Panc1 (cell line): ENCODE measurements at regions of chr11 and their contacts with region 1.

Region 1: GRCh38 chr11:83827940-83828554 is 541.9 kb upstream of the CCDC90B start:
- DNase-seq: peak; percentile 28
- ATAC-seq: peak; percentile 87
- H3K4me3 ChIP-seq: peak overlapping the region; percentile 14 to 25; a peak in 3 of 4 replicates
- H3K27ac ChIP-seq: no peak overlapping the region
- H3K4me1 ChIP-seq: no peaks in the 10 kb centered on the region
- H3K27me3 ChIP-seq: peaks cover 5% of the 10 kb centered on the region; the same call in 1 of the 2 replicates
- CTCF ChIP-seq: peak; percentile 77

Region 2: DNA sequence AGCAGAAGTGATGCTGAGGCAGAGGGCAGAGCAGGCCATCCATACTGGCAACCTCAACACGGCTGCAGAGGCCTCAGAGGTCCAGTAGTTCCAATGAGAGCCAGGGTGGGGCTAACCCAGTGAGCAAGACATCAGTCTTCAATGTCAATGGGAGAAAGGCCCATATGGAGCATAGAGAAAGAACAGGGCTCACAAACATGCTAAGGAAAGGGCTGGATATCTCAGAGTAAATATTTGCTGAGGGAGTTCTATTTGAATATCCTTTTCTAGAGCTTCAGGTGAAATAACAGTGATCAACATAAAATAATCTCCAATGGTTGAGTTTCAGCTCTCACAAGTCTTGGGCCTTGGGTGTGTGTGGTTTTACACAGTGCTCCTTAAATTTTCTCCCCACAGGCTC is 491.1 kb before region 1 on chr11:
- CTCF ChIA-PET with region 1: no interaction called
- POLR2A ChIA-PET with region 1: no interaction called
- in situ Hi-C with region 1: no loop called
- intact Hi-C with region 1: no loop called
- DNase-seq: no peak
- ATAC-seq: no peak
- H3K4me3 ChIP-seq: no peak overlapping the region
- H3K27ac ChIP-seq: no peak overlapping the region
- H3K4me1 ChIP-seq: no peaks in the 10 kb centered on the region
- H3K27me3 ChIP-seq: no peaks in the 10 kb centered on the region
- CTCF ChIP-seq: no peak

Region 3: DNA sequence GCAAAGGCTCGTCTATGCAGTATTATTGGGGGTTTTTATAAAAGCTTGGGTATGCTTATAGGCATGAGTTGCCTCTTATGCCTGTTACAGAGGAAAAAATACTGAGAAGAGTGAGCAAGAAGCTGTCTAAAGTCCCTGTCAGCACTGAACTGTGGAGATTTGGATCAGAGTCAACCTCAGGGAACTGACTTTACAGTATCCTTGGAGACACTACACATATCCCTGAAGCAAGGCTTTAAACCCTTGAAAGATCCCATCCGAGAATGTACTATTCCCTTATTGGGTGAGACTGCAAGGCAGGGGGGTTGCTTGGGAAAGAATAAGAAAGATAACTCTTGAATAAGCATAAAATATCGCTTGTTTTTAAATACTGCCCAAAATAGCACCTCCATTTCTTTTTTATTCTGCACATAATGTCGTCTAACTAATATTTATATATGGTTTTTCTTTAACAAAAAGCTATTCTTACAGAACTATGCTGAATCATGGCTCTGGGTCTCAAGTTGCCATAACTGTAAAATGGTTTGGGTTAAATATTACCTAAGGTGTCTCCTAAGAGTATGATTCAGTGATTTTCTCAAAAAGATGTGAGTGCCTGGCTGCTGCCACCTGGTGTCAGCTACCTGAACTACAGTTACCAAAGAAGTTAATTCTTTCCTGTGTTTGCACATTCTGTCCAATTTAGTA is 736.3 kb after region 1 on chr11:
- CTCF ChIA-PET with region 1: no interaction called
- POLR2A ChIA-PET with region 1: no interaction called
- in situ Hi-C with region 1: no loop called
- intact Hi-C with region 1: loop called (anchors 2 kb)
- DNase-seq: peak; percentile 22
- ATAC-seq: no peak
- H3K4me3 ChIP-seq: no peak overlapping the region
- H3K27ac ChIP-seq: no peak overlapping the region
- H3K4me1 ChIP-seq: no peaks in the 10 kb centered on the region
- H3K27me3 ChIP-seq: no peaks in the 10 kb centered on the region
- CTCF ChIP-seq: peak; percentile 87; the same call in 1 of the 2 replicates